Activated B cell treated with CpG ODN at 0.5 μM for 24 hours (primary cell): ENCODE measurements at regions of chr3 and their contacts with region 1.

Region 1: DNA sequence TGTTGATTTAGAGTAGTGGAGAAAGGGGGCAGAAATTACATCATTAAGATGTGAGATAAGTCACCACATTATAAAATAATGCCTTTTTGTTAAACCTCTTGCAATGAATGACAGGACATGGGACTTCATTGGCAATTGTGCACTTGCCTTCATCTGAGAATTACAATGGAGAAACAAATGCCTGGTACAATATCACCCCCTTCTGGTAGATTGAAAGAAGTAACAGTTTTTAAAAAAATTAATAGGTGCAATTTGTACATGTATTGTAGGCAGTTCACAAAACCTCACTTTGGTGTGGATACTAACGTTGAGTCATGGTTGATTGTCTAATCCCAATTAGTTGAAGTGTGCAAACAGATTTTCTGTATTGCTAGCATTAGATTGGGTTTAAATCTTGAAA is 4.6 kb upstream of the P2RY14 start:
- DNase-seq: no peak
- ATAC-seq: peak; percentile 38
- H3K4me3 Mint-ChIP-seq: no peak overlapping the region
- H3K27ac Mint-ChIP-seq: no peak overlapping the region
- H3K4me1 Mint-ChIP-seq: peaks cover 30% of the 10 kb centered on the region
- H3K27me3 Mint-ChIP-seq: no peaks in the 10 kb centered on the region
- CTCF ChIP-seq: peak; percentile 78

Region 2: DNA sequence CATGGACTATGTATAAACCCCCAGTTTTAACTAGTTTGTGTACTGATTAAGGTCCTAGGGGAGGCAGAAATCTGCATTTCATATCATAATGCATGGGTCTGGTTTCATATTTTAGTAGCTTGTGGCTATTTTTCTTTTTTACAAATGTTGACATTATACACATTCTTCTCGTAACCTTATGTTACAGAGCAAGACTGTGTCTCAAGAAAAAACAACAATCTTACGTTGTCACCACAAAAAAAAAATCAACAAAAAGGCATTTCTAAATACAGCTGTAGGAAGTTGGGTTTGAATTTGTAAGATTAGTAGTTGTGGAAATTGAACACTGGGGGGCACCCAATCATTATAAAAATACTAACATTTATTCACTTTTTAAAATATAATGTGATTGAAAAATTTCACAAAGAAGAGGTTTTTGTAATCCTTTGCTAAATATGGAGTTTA is 754.5 kb before region 1 on chr3:
- CTCF ChIA-PET with region 1: no interaction called
- POLR2A ChIA-PET with region 1: no interaction called
- intact Hi-C with region 1: loop called (anchors 1 kb)
- DNase-seq: no peak
- ATAC-seq: no peak
- H3K4me3 Mint-ChIP-seq: no peak overlapping the region
- H3K27ac Mint-ChIP-seq: no peak overlapping the region
- H3K4me1 Mint-ChIP-seq: no peaks in the 10 kb centered on the region
- H3K27me3 Mint-ChIP-seq: no peaks in the 10 kb centered on the region
- CTCF ChIP-seq: no peak

Region 3: GRCh38 chr3:150925751-150926201 is 357.1 kb before region 1 on chr3:
- CTCF ChIA-PET with region 1: interaction called, 4 read pairs
- POLR2A ChIA-PET with region 1: no interaction called
- intact Hi-C with region 1: loop called (anchors 1 kb)
- DNase-seq: peak; percentile 46
- ATAC-seq: peak; percentile 84
- H3K4me3 Mint-ChIP-seq: peak overlapping the region; percentile 75
- H3K27ac Mint-ChIP-seq: no peak overlapping the region
- H3K4me1 Mint-ChIP-seq: peaks cover 9% of the 10 kb centered on the region
- H3K27me3 Mint-ChIP-seq: peaks cover 12% of the 10 kb centered on the region
- CTCF ChIP-seq: no peak

Region 4: GRCh38 chr3:151156618-151157216 is 126.2 kb before region 1 on chr3:
- CTCF ChIA-PET with region 1: interaction called, 10 read pairs
- POLR2A ChIA-PET with region 1: no interaction called
- intact Hi-C with region 1: loop called (anchors 1 kb)
- DNase-seq: no peak
- ATAC-seq: peak; percentile 87
- H3K4me3 Mint-ChIP-seq: no peak overlapping the region
- H3K27ac Mint-ChIP-seq: no peak overlapping the region
- H3K4me1 Mint-ChIP-seq: no peaks in the 10 kb centered on the region
- H3K27me3 Mint-ChIP-seq: no peaks in the 10 kb centered on the region
- CTCF ChIP-seq: no peak

Region 5: DNA sequence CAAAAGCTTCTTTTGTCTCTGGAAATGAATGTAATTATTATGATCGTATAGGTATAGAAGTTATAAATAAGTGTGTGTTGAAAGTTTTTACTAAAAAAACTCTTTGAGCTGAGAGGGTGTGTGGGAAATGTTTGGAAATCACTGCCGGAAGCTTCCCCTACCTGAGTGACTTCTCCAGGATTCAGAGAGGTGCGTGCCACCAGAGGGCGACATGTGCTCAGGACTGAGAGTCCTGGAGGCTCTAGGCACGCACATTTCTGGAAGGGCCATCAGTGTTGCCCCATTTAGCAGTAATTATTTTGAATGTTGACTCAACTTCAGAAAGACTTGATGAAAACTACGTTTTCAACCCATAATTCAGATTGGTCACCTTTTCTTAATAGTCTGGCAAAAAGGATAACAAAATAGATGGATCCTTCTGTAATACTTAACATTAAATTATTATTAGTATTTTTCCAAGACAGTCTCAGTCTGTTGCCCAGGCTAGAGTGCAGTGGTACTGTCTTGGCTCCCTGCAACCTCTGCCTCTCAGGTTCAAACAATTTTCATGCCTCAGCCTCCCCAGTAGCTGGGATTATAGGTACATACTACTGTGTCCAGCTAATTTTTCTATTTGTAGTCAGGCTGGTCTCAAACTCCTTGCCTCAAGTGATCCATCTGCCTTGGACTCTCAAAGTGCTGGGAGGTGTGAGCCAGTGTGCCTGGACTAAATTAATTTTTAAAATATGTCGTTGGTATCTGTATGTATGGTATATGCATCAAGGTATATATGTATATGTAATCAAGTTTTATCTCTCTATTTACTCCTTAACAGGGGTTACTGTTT is 114.4 kb before region 1 on chr3:
- CTCF ChIA-PET with region 1: interaction called, 122 read pairs
- POLR2A ChIA-PET with region 1: interaction called, 4 read pairs
- intact Hi-C with region 1: loop called (anchors 1 kb)
- DNase-seq: peak; percentile 54
- ATAC-seq: no peak
- H3K4me3 Mint-ChIP-seq: no peak overlapping the region
- H3K27ac Mint-ChIP-seq: no peak overlapping the region
- H3K4me1 Mint-ChIP-seq: peaks cover 43% of the 10 kb centered on the region
- H3K27me3 Mint-ChIP-seq: no peaks in the 10 kb centered on the region
- CTCF ChIP-seq: peak; percentile 65

Region 6: DNA sequence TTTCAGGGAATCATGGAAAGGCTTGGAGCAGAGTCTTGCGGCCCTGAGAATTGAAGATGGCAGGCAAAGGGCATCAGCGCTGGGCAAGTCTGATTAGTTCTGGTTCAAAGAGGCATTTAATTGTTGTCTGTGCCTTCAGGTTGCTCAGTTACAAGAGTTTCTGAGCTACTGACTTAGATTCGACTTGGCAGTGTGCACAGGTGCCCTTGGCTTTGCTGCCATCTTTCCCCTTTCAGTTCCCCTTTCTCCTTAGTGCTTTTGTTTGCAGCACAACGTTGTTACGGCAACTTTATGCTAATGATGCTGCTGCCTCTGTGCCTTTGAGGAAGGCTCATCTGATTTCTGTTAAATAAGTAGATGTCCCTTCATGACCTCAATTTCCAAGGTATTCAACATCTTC is 17.1 kb before region 1 on chr3:
- CTCF ChIA-PET with region 1: interaction called, 24 read pairs
- POLR2A ChIA-PET with region 1: interaction called, 16 read pairs
- intact Hi-C with region 1: no loop called
- DNase-seq: peak; percentile 44
- ATAC-seq: peak; percentile 87
- H3K4me3 Mint-ChIP-seq: peak overlapping the region; percentile 60
- H3K27ac Mint-ChIP-seq: peak overlapping the region; percentile 98
- H3K4me1 Mint-ChIP-seq: peaks cover 66% of the 10 kb centered on the region
- H3K27me3 Mint-ChIP-seq: no peaks in the 10 kb centered on the region
- CTCF ChIP-seq: no peak